Panc1 (cell line): ENCODE measurements at regions of chr17 and their contacts with region 1.

Region 1: DNA sequence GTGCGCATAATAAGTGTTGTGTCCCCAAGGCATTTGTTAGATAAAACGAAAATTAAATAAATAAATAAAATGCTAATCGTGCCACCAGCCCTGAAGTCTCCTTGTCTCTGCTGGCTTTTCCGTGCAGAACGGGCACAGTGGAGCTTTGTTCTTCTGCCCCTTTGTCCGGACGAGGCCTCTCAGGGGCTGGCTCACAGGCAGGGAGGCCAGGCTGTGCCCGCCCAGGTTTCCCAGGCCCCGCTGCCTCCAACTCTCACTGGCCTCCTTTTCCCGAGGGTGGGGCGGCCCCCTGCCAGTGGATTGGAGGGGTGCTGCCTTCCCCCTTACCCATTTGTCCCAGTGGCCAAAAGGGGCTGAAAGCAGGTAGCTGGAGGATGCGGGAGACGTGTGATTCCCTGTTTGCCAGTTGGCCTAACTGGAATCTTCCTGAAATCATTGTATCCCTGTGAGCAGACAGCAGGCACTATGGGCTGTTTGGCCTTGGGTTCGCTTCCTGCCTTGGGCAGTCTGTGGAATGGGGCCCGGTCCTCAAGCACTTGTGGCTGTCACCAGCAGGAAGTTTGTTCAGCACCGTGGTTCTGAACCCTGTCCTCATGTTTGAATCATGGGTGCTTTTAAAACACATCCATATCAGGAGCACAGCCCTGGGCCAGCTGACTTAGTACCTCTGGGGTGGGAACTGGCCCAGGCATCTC is 64.4 kb downstream of the KSR1 start:
- DNase-seq: no peak
- ATAC-seq: no peak
- H3K4me3 ChIP-seq: no peak overlapping the region
- H3K27ac ChIP-seq: no peak overlapping the region
- H3K4me1 ChIP-seq: no peaks in the 10 kb centered on the region
- H3K27me3 ChIP-seq: no peaks in the 10 kb centered on the region
- CTCF ChIP-seq: no peak

Region 2: GRCh38 chr17:27540318-27541101 is 19.9 kb after region 1 on chr17:
- CTCF ChIA-PET with region 1: no interaction called
- POLR2A ChIA-PET with region 1: interaction called, 12 read pairs
- in situ Hi-C with region 1: no loop called
- intact Hi-C with region 1: no loop called
- DNase-seq: no peak
- ATAC-seq: 0 out of 2 replicates have a peak, but pooled peaks have one; percentile 26
- H3K4me3 ChIP-seq: no peak overlapping the region
- H3K27ac ChIP-seq: no peak overlapping the region
- H3K4me1 ChIP-seq: peaks cover 5% of the 10 kb centered on the region
- H3K27me3 ChIP-seq: no peaks in the 10 kb centered on the region
- CTCF ChIP-seq: no peak

Region 3: DNA sequence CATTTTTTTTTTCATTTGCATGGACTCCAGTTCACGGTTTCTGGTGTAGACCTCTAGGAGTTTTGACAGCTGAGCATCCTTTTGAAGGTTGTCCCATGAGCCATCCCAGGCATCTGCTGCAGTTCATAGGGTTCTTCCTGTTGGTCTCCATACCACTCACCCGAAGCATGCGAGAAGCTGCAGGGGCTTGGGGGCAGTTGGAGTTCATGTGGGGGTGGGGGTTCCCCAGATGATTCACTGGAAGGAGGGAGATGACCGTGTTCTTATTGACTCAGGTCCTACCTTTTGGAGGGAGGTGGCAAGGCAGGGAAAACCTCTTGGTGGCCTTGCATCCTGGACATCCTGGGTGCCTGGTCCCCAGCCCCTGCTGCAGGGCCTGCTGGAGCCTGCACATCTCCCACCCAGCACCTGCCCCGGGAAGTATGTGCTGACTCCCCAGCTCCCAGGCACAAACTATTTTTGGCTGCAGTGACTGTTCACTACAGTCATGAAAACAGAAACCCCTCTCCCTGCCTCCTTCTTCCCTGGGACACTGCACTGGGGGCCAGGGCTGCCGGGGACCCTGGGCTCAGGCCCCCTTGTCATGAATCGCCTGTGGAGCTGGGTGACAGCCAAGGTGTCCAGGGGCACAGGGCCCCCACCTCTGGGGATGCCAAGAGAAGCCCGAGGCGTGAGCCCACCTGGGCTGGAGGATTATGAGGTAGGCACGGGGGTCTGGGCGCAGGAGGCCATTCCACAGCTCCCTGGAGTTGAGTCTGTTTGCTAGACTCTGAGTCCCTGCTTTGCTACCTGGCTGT is 45.4 kb after region 1 on chr17:
- CTCF ChIA-PET with region 1: no interaction called
- POLR2A ChIA-PET with region 1: no interaction called
- in situ Hi-C with region 1: no loop called
- intact Hi-C with region 1: loop called (anchors 2 kb)
- DNase-seq: no peak
- ATAC-seq: no peak
- H3K4me3 ChIP-seq: no peak overlapping the region
- H3K27ac ChIP-seq: no peak overlapping the region
- H3K4me1 ChIP-seq: no peaks in the 10 kb centered on the region
- H3K27me3 ChIP-seq: no peaks in the 10 kb centered on the region
- CTCF ChIP-seq: no peak